CD8-positive, alpha-beta T cell (primary cell): ENCODE measurements at regions of chr13 and their contacts with region 1.

Region 1: GRCh38 chr13:19863323-19864023 is at the start of gene ZMYM5:
- DNase-seq: peak; percentile 85 to 98 (median 95)
- ATAC-seq: peak; percentile 83
- H3K4me3 ChIP-seq: peak within 1 kb of the TSS; percentile 64 to 74
- H3K4me3 Mint-ChIP-seq: peak within 1 kb of the TSS; percentile 90
- H3K27ac ChIP-seq: peak within 1 kb of the TSS; percentile 78 to 97
- H3K27ac Mint-ChIP-seq: peak within 1 kb of the TSS; percentile 97
- H3K4me1 ChIP-seq: peaks cover 25% of the 10 kb centered on the region
- H3K4me1 Mint-ChIP-seq: peaks cover 35% of the 10 kb centered on the region
- H3K27me3 ChIP-seq: no peaks in the 10 kb centered on the region
- H3K27me3 Mint-ChIP-seq: no peaks in the 10 kb centered on the region
- CTCF ChIP-seq: no peak
- total RNA-seq, gene ZMYM5: 25.1 to 25.8 TPM

Region 2: GRCh38 chr13:19633479-19634255 is 229.8 kb before region 1 on chr13 and contains the start of gene MPHOSPH8:
- CTCF ChIA-PET with region 1: no interaction called
- POLR2A ChIA-PET with region 1: interaction called, 7 read pairs
- intact Hi-C with region 1: loop called (anchors 2 to 5 kb)
- DNase-seq: peak; percentile 88 to 98 (median 93)
- ATAC-seq: peak; percentile 95
- H3K4me3 ChIP-seq: peak within 1 kb of the TSS; percentile 82 to 89
- H3K4me3 Mint-ChIP-seq: peak within 1 kb of the TSS; percentile 100
- H3K27ac ChIP-seq: peak within 1 kb of the TSS; percentile 88 to 90
- H3K27ac Mint-ChIP-seq: peak within 1 kb of the TSS; percentile 100
- H3K4me1 ChIP-seq: peaks cover 35% of the 10 kb centered on the region
- H3K4me1 Mint-ChIP-seq: peaks cover 33% of the 10 kb centered on the region
- H3K27me3 ChIP-seq: no peaks in the 10 kb centered on the region
- H3K27me3 Mint-ChIP-seq: no peaks in the 10 kb centered on the region
- CTCF ChIP-seq: no peak
- total RNA-seq, gene MPHOSPH8: 32.9 to 35.6 TPM

Region 3: DNA sequence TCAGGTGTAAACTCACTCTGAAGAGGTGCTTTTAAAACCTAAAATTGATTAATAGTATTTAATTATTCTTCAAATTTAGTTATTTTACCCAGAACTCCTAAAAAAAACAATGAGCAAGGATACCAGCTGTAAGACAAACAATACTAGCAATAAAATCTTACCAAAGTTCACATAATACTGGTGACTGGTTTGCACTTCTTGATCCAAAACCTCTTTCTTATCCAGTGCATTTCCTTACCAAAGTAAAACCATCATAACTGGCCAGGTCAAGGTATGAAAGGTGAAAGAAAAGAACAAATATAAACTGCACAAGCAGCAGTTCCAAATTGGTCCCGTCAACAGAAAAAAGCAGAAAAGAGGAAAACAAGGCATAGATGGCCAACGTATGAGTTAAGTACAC is 143.4 kb before region 1 on chr13:
- CTCF ChIA-PET with region 1: no interaction called
- POLR2A ChIA-PET with region 1: no interaction called
- intact Hi-C with region 1: no loop called
- DNase-seq: no peak
- ATAC-seq: no peak
- H3K4me3 ChIP-seq: no peak overlapping the region
- H3K4me3 Mint-ChIP-seq: no peak overlapping the region
- H3K27ac ChIP-seq: no peak overlapping the region
- H3K27ac Mint-ChIP-seq: peak overlapping the region; percentile 42
- H3K4me1 ChIP-seq: no peaks in the 10 kb centered on the region
- H3K4me1 Mint-ChIP-seq: peaks cover 19% of the 10 kb centered on the region
- H3K27me3 ChIP-seq: no peaks in the 10 kb centered on the region
- H3K27me3 Mint-ChIP-seq: no peaks in the 10 kb centered on the region
- CTCF ChIP-seq: no peak

Region 4: GRCh38 chr13:20118268-20119140 is 255.0 kb after region 1 on chr13:
- CTCF ChIA-PET with region 1: no interaction called
- POLR2A ChIA-PET with region 1: no interaction called
- intact Hi-C with region 1: loop called in 1 of 2 experiments (anchors 2 kb)
- DNase-seq: peak in 7 of 9 experiments; percentile 34 to 64 (median 49)
- ATAC-seq: peak; percentile 44
- H3K4me3 ChIP-seq: peak overlapping the region; percentile 54 to 65
- H3K4me3 Mint-ChIP-seq: peak overlapping the region; percentile 90
- H3K27ac ChIP-seq: peak overlapping the region in 1 of 2 experiments; percentile 36
- H3K27ac Mint-ChIP-seq: peak overlapping the region; percentile 84
- H3K4me1 ChIP-seq: peaks cover 16% of the 10 kb centered on the region
- H3K4me1 Mint-ChIP-seq: peaks cover 20% of the 10 kb centered on the region
- H3K27me3 ChIP-seq: no peaks in the 10 kb centered on the region
- H3K27me3 Mint-ChIP-seq: peaks cover 2% of the 10 kb centered on the region
- CTCF ChIP-seq: no peak

Region 5: GRCh38 chr13:20902438-20903163 is 1039.1 kb after region 1 on chr13 and contains the start of gene XPO4:
- CTCF ChIA-PET with region 1: no interaction called
- POLR2A ChIA-PET with region 1: no interaction called
- intact Hi-C with region 1: loop called in 1 of 2 experiments (anchors 10 kb)
- DNase-seq: peak; percentile 55 to 88 (median 75)
- ATAC-seq: peak; percentile 96
- H3K4me3 ChIP-seq: peak within 1 kb of the TSS; percentile 81 to 89
- H3K4me3 Mint-ChIP-seq: peak within 1 kb of the TSS; percentile 94
- H3K27ac ChIP-seq: peak within 1 kb of the TSS; percentile 80 to 83
- H3K27ac Mint-ChIP-seq: peak within 1 kb of the TSS; percentile 93
- H3K4me1 ChIP-seq: peaks cover 11% of the 10 kb centered on the region
- H3K4me1 Mint-ChIP-seq: peaks cover 31% of the 10 kb centered on the region
- H3K27me3 ChIP-seq: no peaks in the 10 kb centered on the region
- H3K27me3 Mint-ChIP-seq: no peaks in the 10 kb centered on the region
- CTCF ChIP-seq: no peak
- total RNA-seq, gene XPO4: 23.8 to 24.5 TPM